A549 (cell line): ENCODE measurements at regions of chr7 and their contacts with region 1.

Region 1: GRCh38 chr7:100563809-100564400 is 9.8 kb downstream of the SAP25 start:
- DNase-seq: peak; percentile 61 to 84
- ATAC-seq: peak; percentile 48 to 79; a peak in 4 of 6 replicates
- H3K4me3 ChIP-seq: no peak overlapping the region
- H3K27ac ChIP-seq: 0 out of 6 replicates have a peak overlapping the region, but pooled peaks of 1 of the 2 experiments have one; percentile 27
- H3K4me1 ChIP-seq: peaks cover 6% of the 10 kb centered on the region; the same call in 2 of the 3 replicates
- CTCF ChIP-seq: peak; percentile 72
- EP300 ChIP-seq: no peak
- POLR2A ChIP-seq: no peak
- RAD21 ChIP-seq: peak; percentile 55 to 68

Region 2: GRCh38 chr7:100469227-100470044 is 94.5 kb before region 1 on chr7:
- CTCF ChIA-PET with region 1: interaction called, 273 read pairs
- POLR2A ChIA-PET with region 1: no interaction called
- DNase-seq: peak; percentile 72 to 90
- ATAC-seq: peak; percentile 92 to 93
- H3K4me3 ChIP-seq: no peak overlapping the region
- H3K27ac ChIP-seq: peak overlapping the region in 1 of 2 experiments; percentile 58; a peak in 2 of 6 replicates
- H3K4me1 ChIP-seq: peaks cover 13% of the 10 kb centered on the region
- CTCF ChIP-seq: peak; percentile 83
- EP300 ChIP-seq: no peak
- POLR2A ChIP-seq: no peak
- RAD21 ChIP-seq: peak; percentile 89 to 91

Region 3: DNA sequence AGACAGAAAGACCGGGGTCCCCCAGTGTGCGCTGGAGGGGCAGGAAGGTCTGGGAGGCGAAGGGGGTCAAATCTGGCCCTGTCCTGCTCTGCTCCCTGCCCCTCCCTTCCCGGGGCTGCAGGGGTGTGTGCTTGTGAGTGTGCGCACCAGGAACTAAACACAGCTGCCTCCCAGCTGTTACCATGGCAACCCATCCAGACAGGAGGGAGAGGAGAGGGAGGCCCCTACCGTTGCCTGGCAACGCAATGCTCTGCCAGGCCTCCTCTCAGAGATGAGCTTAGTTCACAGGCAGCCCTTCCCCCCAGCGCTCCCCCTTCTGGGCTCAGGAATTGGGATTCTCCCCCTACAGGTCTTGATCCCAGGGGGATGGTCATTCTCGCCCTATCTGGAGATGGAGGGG is 74.1 kb before region 1 on chr7:
- CTCF ChIA-PET with region 1: interaction called, 24 read pairs
- POLR2A ChIA-PET with region 1: no interaction called
- DNase-seq: peak; percentile 86 to 87
- ATAC-seq: peak; percentile 41 to 72
- H3K4me3 ChIP-seq: no peak overlapping the region
- H3K27ac ChIP-seq: no peak overlapping the region
- H3K4me1 ChIP-seq: peaks cover 23% of the 10 kb centered on the region
- CTCF ChIP-seq: no peak
- EP300 ChIP-seq: no peak
- POLR2A ChIP-seq: no peak
- RAD21 ChIP-seq: no peak

Region 4: DNA sequence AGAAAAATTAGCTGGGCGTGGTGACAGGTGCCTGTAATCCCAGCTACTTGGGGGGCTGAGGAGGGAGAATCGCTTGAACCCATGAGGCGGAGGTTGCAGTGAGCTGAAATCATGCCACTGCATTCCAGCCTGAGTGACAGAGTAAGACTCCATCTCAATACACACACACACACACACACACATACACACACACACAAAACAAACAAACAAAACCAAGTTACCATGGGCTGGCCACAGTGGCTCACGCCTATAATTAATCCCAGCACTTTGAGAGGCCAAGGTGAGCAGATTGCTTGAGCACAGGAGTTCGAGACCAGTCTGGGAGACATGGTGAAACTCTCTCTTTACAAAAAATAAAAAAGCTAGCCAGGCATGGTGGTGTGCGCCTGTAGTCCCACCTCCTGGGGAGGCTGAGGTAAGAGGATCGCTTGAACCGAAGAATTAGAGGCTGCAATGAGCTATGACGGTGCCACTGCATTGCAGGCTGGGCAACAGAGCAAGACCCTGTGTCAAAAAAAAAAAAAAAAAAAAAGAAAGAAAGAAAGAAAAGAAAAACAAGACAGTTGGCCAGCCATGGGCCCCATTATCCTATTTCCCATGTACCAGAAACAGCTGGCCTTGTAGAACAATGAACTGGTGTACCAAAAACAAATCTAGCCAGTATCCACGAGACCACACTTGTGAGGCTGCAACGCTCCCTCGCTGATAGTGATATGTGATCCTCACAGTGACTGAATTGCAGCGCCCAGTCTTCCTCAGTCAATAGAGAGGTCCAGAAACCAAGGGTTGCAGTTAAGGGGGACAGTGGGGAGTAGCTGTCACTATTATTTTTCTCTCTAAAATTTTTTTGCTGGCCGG is 31.5 kb before region 1 on chr7:
- CTCF ChIA-PET with region 1: interaction called, 24 read pairs
- POLR2A ChIA-PET with region 1: no interaction called
- DNase-seq: no peak
- ATAC-seq: no peak
- H3K4me3 ChIP-seq: no peak overlapping the region
- H3K27ac ChIP-seq: no peak overlapping the region
- H3K4me1 ChIP-seq: no peaks in the 10 kb centered on the region
- CTCF ChIP-seq: no peak
- EP300 ChIP-seq: no peak
- POLR2A ChIP-seq: no peak
- RAD21 ChIP-seq: no peak

Region 5: DNA sequence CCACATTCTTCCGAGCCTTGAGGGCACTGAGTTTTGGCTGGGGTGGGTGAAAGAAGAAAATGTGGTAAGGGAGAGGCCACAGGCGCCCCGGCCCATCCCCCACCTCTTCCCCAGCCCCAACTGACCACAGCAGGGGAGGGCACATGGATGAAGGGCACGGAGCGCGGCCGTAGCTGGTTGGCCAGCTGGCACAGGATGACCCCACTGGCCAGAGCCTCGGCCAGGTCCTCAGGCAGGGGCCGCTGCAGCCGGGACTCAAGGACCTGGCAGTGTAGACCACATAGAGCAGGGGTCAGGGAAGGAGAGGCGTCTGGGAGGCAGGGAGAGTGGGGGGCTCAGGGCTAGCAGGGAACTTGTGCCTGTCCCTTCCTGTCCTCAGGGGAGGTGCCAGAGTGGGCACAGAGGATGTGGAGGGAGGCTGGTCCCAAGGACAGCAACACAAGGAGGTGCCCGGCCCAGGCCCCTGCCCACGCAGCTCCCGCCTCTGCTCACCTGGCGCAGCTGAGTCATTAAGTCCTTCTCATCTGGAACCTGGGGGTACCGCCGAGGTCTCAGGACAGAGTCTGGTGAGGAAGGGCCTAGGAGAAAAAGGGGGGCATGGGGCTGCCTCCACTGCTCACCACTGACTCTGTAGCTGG is 12.0 kb after region 1 on chr7:
- CTCF ChIA-PET with region 1: interaction called, 135 read pairs
- POLR2A ChIA-PET with region 1: no interaction called
- DNase-seq: no peak
- ATAC-seq: no peak
- H3K4me3 ChIP-seq: no peak overlapping the region
- H3K27ac ChIP-seq: no peak overlapping the region
- H3K4me1 ChIP-seq: peaks cover 9% of the 10 kb centered on the region; the same call in 1 of the 3 replicates
- CTCF ChIP-seq: no peak
- EP300 ChIP-seq: no peak
- POLR2A ChIP-seq: no peak
- RAD21 ChIP-seq: no peak

Region 6: GRCh38 chr7:100611974-100612729 is 48.2 kb after region 1 on chr7 and contains the start of gene MOSPD3:
- CTCF ChIA-PET with region 1: interaction called, 13 read pairs
- POLR2A ChIA-PET with region 1: no interaction called
- DNase-seq: peak; percentile 99 to 100
- ATAC-seq: peak; percentile 97
- H3K4me3 ChIP-seq: peak within 1 kb of the TSS; percentile 67
- H3K27ac ChIP-seq: peak within 1 kb of the TSS; percentile 83 to 90
- H3K4me1 ChIP-seq: peaks cover 4% of the 10 kb centered on the region; the same call in 1 of the 3 replicates
- CTCF ChIP-seq: no peak
- EP300 ChIP-seq: no peak
- POLR2A ChIP-seq: peak; percentile 43
- RAD21 ChIP-seq: no peak
- polyA plus RNA-seq, gene MOSPD3: 4.6 and 6.1 TPM in 2 replicates